ENCODE measurements at regions of chr4 and their contacts with region 1.

Region 1: DNA sequence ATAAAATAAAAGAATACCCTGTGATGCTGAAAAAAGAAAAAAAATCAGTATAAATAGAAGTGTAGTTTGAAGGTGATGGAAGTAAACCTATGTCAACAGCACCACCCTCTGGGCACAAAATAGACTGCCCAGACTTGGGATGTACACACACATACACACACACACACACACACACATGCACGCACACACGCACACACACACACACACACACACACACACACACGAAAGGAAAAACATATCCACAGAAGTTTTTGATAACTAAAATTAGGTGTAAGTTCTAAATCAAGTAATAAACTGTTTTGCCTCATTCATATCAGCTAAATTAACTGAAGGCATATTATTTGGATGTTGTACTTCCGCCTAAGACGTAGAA is 40.5 kb downstream of the ANXA5 start:
- DNase-seq: peak; percentile 47
- ATAC-seq: peak; percentile 82

Region 2: GRCh38 chr4:121462660-121463261 is 193.5 kb before region 1 on chr4:
- intact Hi-C with region 1: loop called (anchors 5 kb)
- DNase-seq: no peak
- ATAC-seq: peak; percentile 69